Activated B cell treated with CpG ODN at 0.5 μM for 24 hours (primary cell): ENCODE measurements at regions of chr1 and their contacts with region 1.

Region 1: DNA sequence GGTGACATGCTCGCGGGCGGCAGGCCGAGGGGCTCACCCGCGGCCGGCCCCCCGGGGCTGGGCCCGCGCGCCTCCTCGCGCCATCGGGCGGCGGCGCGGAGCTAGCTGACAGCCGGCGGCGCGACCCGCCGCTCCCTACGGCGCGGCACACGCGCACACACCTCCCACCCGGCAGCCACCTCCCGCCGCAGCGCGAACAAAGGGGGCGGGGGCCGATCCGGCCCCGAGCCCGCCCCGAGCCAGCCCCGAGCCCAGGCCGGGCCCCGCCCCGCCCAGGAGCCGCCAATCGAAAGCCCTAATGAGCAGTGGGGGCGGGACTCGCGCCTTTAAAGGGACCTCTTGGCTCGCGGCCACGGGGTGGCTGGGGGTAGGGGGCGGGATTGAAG is at the start of gene KIF21B:
- DNase-seq: peak; percentile 90
- ATAC-seq: peak; percentile 83
- H3K4me3 Mint-ChIP-seq: peak within 1 kb of the TSS; percentile 89
- H3K27ac Mint-ChIP-seq: peak within 1 kb of the TSS; percentile 97
- H3K4me1 Mint-ChIP-seq: peaks cover 79% of the 10 kb centered on the region
- H3K27me3 Mint-ChIP-seq: no peaks in the 10 kb centered on the region
- CTCF ChIP-seq: no peak
- total RNA-seq, gene KIF21B: 28.1 and 31.8 TPM in 2 replicates

Region 2: GRCh38 chr1:200669314-200670241 is 353.9 kb before region 1 on chr1 and contains the start of gene DDX59:
- CTCF ChIA-PET with region 1: no interaction called
- POLR2A ChIA-PET with region 1: interaction called, 19 read pairs
- intact Hi-C with region 1: no loop called
- DNase-seq: peak; percentile 87
- ATAC-seq: peak; percentile 84
- H3K4me3 Mint-ChIP-seq: peak within 1 kb of the TSS; percentile 97
- H3K27ac Mint-ChIP-seq: peak within 1 kb of the TSS; percentile 96
- H3K4me1 Mint-ChIP-seq: peaks cover 30% of the 10 kb centered on the region
- H3K27me3 Mint-ChIP-seq: no peaks in the 10 kb centered on the region
- CTCF ChIP-seq: no peak
- total RNA-seq, gene DDX59: 27.6 and 28.2 TPM in 2 replicates

Region 3: DNA sequence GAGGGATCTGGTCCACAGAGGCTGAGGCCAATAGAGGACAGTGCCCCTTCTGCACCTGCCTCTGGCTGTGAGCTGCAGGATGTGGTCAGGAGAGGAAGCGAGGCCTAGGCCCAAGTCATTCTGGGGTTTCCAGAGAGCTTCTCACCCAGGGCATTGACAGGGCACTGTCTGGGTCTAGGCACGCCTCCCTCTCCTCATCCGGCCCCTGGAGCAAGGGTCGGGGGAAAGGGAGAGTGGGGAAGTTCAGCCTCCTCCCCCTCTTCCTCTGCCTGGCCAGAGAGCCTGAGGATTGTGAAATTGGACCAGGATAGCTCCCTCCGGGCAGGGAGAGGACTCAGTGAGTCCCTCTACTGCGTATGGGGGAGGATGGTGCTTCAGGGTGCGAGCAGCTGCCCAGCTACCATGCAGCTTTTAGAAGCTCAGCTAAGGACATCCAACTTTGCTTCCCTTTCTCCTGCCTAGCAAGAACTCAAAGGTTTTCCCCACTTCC is 135.1 kb before region 1 on chr1:
- CTCF ChIA-PET with region 1: no interaction called
- POLR2A ChIA-PET with region 1: no interaction called
- intact Hi-C with region 1: loop called (anchors 2 kb)
- DNase-seq: peak; percentile 39
- ATAC-seq: peak; percentile 93
- H3K4me3 Mint-ChIP-seq: peak overlapping the region; percentile 21
- H3K27ac Mint-ChIP-seq: peak overlapping the region; percentile 70
- H3K4me1 Mint-ChIP-seq: peaks cover 58% of the 10 kb centered on the region
- H3K27me3 Mint-ChIP-seq: peaks cover 5% of the 10 kb centered on the region
- CTCF ChIP-seq: no peak

Region 4: GRCh38 chr1:200979574-200980451 is 43.7 kb before region 1 on chr1:
- CTCF ChIA-PET with region 1: interaction called, 22 read pairs
- POLR2A ChIA-PET with region 1: interaction called, 7 read pairs
- intact Hi-C with region 1: no loop called
- DNase-seq: peak; percentile 53
- ATAC-seq: peak; percentile 73
- H3K4me3 Mint-ChIP-seq: no peak overlapping the region
- H3K27ac Mint-ChIP-seq: no peak overlapping the region
- H3K4me1 Mint-ChIP-seq: no peaks in the 10 kb centered on the region
- H3K27me3 Mint-ChIP-seq: no peaks in the 10 kb centered on the region
- CTCF ChIP-seq: no peak

Region 5: DNA sequence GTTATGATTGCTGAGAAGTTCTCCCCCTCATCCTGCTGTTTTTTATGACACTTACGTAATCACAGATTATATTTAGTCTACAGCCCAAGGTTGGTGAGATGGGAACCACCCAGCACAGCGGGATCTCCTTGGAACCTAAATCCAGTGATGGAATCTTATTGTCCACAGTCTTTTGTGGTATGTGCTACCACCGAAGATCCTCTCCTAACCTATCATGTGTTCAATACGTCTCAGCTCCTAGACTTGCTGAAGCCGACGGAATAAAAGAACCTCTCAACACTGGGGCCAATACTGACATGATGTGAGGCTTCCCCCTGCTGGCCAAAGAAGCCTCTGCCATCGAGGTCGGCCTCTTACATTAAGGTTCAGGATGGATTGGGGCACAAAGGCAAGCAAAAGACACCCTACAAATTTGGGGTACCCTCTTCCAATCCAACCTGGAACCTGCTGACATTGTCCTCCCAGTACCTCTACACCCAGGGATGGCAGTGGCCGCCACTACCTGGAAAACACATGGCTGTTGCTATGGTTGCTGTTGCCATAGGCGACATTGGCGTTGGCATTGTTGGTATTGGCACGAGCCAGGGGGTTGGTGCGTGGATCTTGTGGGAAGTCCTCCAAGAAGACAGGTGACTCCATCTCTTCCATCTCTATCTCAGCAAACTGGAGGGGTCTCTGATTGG is 19.4 kb after region 1 on chr1:
- CTCF ChIA-PET with region 1: interaction called, 9 read pairs
- POLR2A ChIA-PET with region 1: no interaction called
- intact Hi-C with region 1: loop called (anchors 1 kb)
- DNase-seq: peak; percentile 47
- ATAC-seq: peak; percentile 93
- H3K4me3 Mint-ChIP-seq: no peak overlapping the region
- H3K27ac Mint-ChIP-seq: peak overlapping the region; percentile 35
- H3K4me1 Mint-ChIP-seq: peaks cover 2% of the 10 kb centered on the region
- H3K27me3 Mint-ChIP-seq: peaks cover 2% of the 10 kb centered on the region
- CTCF ChIP-seq: peak; percentile 70

Region 6: DNA sequence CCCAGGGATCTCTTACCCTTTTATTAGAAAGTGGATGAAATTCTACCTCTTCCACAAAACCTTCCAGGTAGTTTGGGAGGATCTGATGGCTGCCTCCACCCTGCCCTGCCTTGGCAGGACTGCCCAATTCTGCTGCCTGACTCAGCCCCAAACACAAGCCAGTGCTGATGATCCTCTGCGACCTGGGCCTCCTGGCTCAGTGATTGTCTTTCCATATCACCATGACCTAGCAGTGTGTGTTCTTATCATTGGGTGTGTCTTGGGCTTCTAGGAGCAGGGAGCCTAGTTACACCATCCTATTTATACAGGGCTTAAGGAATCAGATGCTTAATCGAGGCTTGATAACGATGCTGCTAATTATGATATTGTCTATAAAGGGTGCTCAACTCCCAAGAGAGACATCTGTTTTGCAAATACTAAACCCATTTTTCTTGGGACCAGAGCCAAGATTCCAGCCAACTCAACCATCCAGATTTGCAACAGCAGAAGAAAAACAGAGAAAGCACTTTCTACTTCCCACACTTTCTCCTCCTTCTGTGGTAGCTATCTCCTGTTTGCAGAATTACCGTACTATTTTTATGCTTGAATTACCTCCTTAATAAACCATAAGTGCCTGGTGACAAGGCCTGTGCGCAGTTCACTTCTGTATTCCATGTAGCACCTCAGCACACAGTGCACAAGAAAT is 36.5 kb after region 1 on chr1:
- CTCF ChIA-PET with region 1: no interaction called
- POLR2A ChIA-PET with region 1: no interaction called
- intact Hi-C with region 1: no loop called
- DNase-seq: no peak
- ATAC-seq: no peak
- H3K4me3 Mint-ChIP-seq: no peak overlapping the region
- H3K27ac Mint-ChIP-seq: no peak overlapping the region
- H3K4me1 Mint-ChIP-seq: peaks cover 32% of the 10 kb centered on the region
- H3K27me3 Mint-ChIP-seq: peaks cover 3% of the 10 kb centered on the region
- CTCF ChIP-seq: no peak

Region 7: GRCh38 chr1:201170533-201171062 is 147.1 kb after region 1 on chr1:
- CTCF ChIA-PET with region 1: no interaction called
- POLR2A ChIA-PET with region 1: no interaction called
- intact Hi-C with region 1: loop called (anchors 5 kb)
- DNase-seq: peak; percentile 63
- ATAC-seq: peak; percentile 99
- H3K4me3 Mint-ChIP-seq: peak overlapping the region; percentile 88
- H3K27ac Mint-ChIP-seq: peak overlapping the region; percentile 79
- H3K4me1 Mint-ChIP-seq: peaks cover 12% of the 10 kb centered on the region
- H3K27me3 Mint-ChIP-seq: peaks cover 4% of the 10 kb centered on the region
- CTCF ChIP-seq: no peak

Region 8: GRCh38 chr1:202643397-202644218 is 1620.1 kb after region 1 on chr1:
- CTCF ChIA-PET with region 1: no interaction called
- POLR2A ChIA-PET with region 1: no interaction called
- intact Hi-C with region 1: loop called (anchors 5 kb)
- DNase-seq: no peak
- ATAC-seq: peak; percentile 62
- H3K4me3 Mint-ChIP-seq: peak overlapping the region; percentile 75
- H3K27ac Mint-ChIP-seq: no peak overlapping the region
- H3K4me1 Mint-ChIP-seq: peaks cover 31% of the 10 kb centered on the region
- H3K27me3 Mint-ChIP-seq: peaks cover 64% of the 10 kb centered on the region
- CTCF ChIP-seq: no peak